ENCODE measurements at regions of chr5 and their contacts with region 1.

Region 1: DNA sequence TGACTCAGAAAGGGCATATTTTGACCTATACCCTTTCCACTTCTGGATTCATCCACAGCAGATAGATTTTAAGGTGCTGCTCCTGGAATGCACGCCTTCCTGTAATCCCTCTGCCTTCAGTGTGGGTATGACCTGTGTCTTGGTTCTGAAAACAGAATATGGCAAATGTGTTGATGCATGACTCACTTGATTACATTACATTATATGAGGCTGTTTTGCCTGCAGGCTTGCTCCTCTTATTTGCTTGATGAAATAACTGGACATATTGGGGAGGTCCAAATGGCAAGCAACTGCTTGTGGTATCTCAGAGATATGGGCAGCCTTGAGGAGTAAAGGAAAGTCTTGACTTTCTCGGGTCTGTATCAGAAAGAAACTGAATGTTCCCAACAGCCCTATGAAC is 468.5 kb downstream of the CDH18 start:
- DNase-seq: no peak
- ATAC-seq: no peak
- H3K4me3 ChIP-seq: no peak overlapping the region
- H3K4me3 Mint-ChIP-seq: no peak overlapping the region
- H3K27ac ChIP-seq: no peak overlapping the region
- H3K27ac Mint-ChIP-seq: no peak overlapping the region
- H3K4me1 ChIP-seq: no peaks in the 10 kb centered on the region
- H3K4me1 Mint-ChIP-seq: no peaks in the 10 kb centered on the region
- H3K27me3 ChIP-seq: no peaks in the 10 kb centered on the region
- H3K27me3 Mint-ChIP-seq: no peaks in the 10 kb centered on the region

Region 2: DNA sequence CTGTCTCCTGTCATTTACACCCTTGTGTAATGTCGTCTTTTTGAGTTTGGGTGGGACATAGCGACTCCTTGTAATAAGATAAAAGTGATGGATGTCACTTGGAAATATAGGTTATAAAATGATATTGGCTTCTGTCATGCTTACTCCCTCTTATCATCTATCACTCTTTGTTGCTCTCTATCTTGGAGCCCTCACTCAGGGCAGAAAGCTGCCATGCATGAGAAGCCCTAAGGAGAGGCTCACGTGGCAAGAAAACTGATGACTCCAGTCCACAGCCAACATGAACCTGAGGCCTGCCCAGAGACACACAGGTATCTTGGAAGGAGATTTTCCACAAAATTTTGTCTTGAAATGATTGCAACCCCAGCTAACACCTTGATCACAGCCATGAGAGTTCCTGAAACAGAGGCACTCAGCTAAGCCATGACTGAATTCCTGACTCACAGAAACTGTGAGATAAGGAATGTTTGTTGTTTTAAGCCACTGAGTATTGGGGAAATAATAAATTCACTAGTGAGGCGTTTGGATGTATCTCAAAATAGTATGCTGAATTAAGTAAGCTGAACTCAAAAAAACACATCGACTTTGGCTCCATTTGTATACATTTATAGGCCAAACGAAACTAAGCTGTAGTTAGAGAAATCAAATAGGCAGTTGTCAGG is 251.8 kb after region 1 on chr5:
- CTCF ChIA-PET with region 1: no interaction called
- POLR2A ChIA-PET with region 1: interaction called in 1 of 2 experiments, 15 read pairs
- DNase-seq: no peak
- ATAC-seq: no peak
- H3K4me3 ChIP-seq: no peak overlapping the region
- H3K4me3 Mint-ChIP-seq: no peak overlapping the region
- H3K27ac ChIP-seq: no peak overlapping the region
- H3K27ac Mint-ChIP-seq: no peak overlapping the region
- H3K4me1 ChIP-seq: no peaks in the 10 kb centered on the region
- H3K4me1 Mint-ChIP-seq: no peaks in the 10 kb centered on the region
- H3K27me3 ChIP-seq: no peaks in the 10 kb centered on the region
- H3K27me3 Mint-ChIP-seq: no peaks in the 10 kb centered on the region

Region 3: GRCh38 chr5:20241351-20241750 is 721.9 kb after region 1 on chr5:
- CTCF ChIA-PET with region 1: no interaction called
- POLR2A ChIA-PET with region 1: no interaction called
- DNase-seq: no peak
- ATAC-seq: no peak
- H3K4me3 ChIP-seq: no peak overlapping the region
- H3K4me3 Mint-ChIP-seq: no peak overlapping the region
- H3K27ac ChIP-seq: no peak overlapping the region
- H3K27ac Mint-ChIP-seq: no peak overlapping the region
- H3K4me1 ChIP-seq: no peaks in the 10 kb centered on the region
- H3K4me1 Mint-ChIP-seq: no peaks in the 10 kb centered on the region
- H3K27me3 ChIP-seq: no peaks in the 10 kb centered on the region
- H3K27me3 Mint-ChIP-seq: no peaks in the 10 kb centered on the region